CD8-positive, alpha-beta T cell (primary cell): ENCODE measurements at regions of chr1 and their contacts with region 1.

Region 1: DNA sequence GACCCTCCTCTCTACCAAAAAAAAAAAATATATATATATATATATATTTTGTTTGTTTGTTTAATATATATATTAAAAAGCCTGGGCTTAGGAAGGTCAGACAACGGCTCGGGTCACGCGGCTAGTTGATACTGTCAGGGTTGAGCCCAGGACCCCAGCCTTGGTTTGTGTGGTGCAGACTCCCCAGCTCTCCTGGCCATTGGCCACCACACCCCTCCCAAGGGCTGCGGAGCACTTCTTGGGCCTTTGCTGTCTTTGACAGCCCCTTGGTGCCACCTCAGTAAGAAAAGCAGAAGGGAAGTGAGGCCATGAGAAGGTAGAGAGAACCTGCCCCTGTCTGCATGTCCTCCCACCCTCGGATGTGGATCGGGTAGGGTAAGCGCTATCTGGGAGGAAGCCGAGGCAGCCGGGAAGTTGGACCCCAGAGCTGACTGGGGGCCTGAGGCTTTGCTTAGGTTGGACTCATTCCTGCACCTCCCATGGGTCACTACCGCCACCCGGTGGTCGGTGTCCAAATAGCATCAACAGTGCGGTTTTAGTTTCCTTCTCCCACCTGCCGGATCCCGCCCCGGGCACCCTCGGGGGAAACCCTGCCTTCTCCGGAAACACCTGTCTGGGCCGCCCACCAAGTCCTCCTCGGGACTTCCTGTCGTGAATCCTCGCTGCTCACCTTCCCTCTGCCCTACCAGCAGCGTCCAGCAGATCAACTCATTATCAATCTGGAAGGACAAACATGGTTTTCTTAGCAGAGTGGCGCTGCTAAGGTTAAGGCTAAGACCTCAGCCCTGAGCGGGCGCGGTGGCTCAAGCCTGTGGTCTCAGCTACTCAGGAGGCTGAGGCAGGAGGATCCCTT is 29.8 kb upstream of the GNPAT start:
- DNase-seq: peak; percentile 76 to 96 (median 90)
- ATAC-seq: peak; percentile 96
- H3K4me3 ChIP-seq: peak overlapping the region; percentile 42 to 52
- H3K4me3 Mint-ChIP-seq: peak overlapping the region; percentile 83
- H3K27ac ChIP-seq: no peak overlapping the region
- H3K27ac Mint-ChIP-seq: peak overlapping the region; percentile 73
- H3K4me1 ChIP-seq: peaks cover 19% of the 10 kb centered on the region
- H3K4me1 Mint-ChIP-seq: peaks cover 28% of the 10 kb centered on the region
- H3K27me3 ChIP-seq: no peaks in the 10 kb centered on the region
- H3K27me3 Mint-ChIP-seq: no peaks in the 10 kb centered on the region
- CTCF ChIP-seq: peak; percentile 93

Region 2: GRCh38 chr1:230642263-230642959 is 568.8 kb before region 1 on chr1 and contains the start of gene COG2:
- CTCF ChIA-PET with region 1: interaction called, 3 read pairs
- POLR2A ChIA-PET with region 1: no interaction called
- intact Hi-C with region 1: loop called (anchors 1 kb)
- DNase-seq: peak; percentile 92 to 99 (median 96)
- ATAC-seq: peak; percentile 96
- H3K4me3 ChIP-seq: peak within 1 kb of the TSS; percentile 72 to 92
- H3K4me3 Mint-ChIP-seq: peak within 1 kb of the TSS; percentile 99
- H3K27ac ChIP-seq: peak within 1 kb of the TSS; percentile 73 to 82
- H3K27ac Mint-ChIP-seq: peak within 1 kb of the TSS; percentile 96
- H3K4me1 ChIP-seq: peaks cover 36% of the 10 kb centered on the region
- H3K4me1 Mint-ChIP-seq: peaks cover 54% of the 10 kb centered on the region
- H3K27me3 ChIP-seq: peaks cover 0 to 2% of the 10 kb centered on the region in 2 experiments
- H3K27me3 Mint-ChIP-seq: peaks cover 13% of the 10 kb centered on the region
- CTCF ChIP-seq: peak; percentile 100
- total RNA-seq, gene COG2: 20.1 to 25.7 TPM

Region 3: GRCh38 chr1:230867903-230868735 is 343.1 kb before region 1 on chr1 and contains the start of gene C1orf198:
- CTCF ChIA-PET with region 1: no interaction called
- POLR2A ChIA-PET with region 1: no interaction called
- intact Hi-C with region 1: loop called in 1 of 2 experiments (anchors 2 kb)
- DNase-seq: peak; percentile 53 to 88 (median 72)
- ATAC-seq: peak; percentile 93
- H3K4me3 ChIP-seq: peak within 1 kb of the TSS; percentile 65 to 79
- H3K4me3 Mint-ChIP-seq: peak within 1 kb of the TSS; percentile 89
- H3K27ac ChIP-seq: peak within 1 kb of the TSS in 1 of 2 experiments; percentile 57
- H3K27ac Mint-ChIP-seq: peak within 1 kb of the TSS; percentile 49
- H3K4me1 ChIP-seq: peaks cover 14% of the 10 kb centered on the region
- H3K4me1 Mint-ChIP-seq: peaks cover 21% of the 10 kb centered on the region
- H3K27me3 ChIP-seq: no peaks in the 10 kb centered on the region
- H3K27me3 Mint-ChIP-seq: peaks cover 18% of the 10 kb centered on the region
- CTCF ChIP-seq: no peak
- total RNA-seq, gene C1orf198: 3.2 to 3.8 TPM

Region 4: DNA sequence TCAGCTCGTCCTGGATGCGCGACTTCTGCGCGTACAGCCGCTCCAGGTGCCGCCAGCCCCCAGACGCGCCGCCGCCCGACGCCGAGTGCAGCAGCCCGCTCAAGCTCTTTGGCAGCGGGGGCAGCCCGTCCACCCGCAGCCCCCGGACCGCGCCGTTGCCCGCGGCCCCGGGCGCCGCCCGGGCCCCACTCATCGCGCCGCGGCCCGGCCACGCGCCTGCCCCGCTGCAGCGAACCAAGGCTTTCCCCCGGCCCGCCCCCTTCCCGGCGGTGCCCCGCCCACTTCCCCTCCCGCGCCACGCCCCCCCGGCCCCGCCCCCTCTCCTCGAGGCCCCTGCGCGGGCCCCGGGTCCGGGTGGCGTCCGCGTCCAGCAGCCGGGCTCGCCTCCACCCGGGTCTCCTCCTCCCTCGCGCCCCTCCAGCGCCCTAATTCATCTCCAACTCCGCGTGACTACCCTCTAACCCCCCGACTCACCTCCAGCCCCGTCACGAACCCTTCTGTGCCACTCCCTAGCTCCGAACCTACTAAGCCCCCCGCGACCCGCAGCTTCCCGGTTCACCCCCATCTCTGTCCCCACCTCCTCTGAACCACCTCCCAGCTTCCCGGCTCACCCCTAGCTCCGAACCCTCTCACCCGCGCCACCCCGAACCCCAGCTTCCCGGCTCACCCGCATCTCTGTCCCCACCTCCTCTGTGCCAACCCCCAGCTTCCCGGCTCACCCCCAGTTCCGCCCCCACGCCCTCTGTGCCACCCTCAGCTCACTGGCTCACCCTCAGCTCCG is 171.0 kb before region 1 on chr1 and contains the start of gene FAM89A:
- CTCF ChIA-PET with region 1: no interaction called
- POLR2A ChIA-PET with region 1: no interaction called
- intact Hi-C with region 1: loop called (anchors 1 to 2 kb)
- DNase-seq: peak; percentile 44 to 86 (median 71)
- ATAC-seq: peak; percentile 72
- H3K4me3 ChIP-seq: peak within 1 kb of the TSS; percentile 81 to 83
- H3K4me3 Mint-ChIP-seq: peak within 1 kb of the TSS; percentile 83
- H3K27ac ChIP-seq: no peak within 1 kb of the TSS
- H3K27ac Mint-ChIP-seq: peak within 1 kb of the TSS; percentile 27
- H3K4me1 ChIP-seq: peaks cover 22% of the 10 kb centered on the region
- H3K4me1 Mint-ChIP-seq: peaks cover 33% of the 10 kb centered on the region
- H3K27me3 ChIP-seq: no peaks in the 10 kb centered on the region
- H3K27me3 Mint-ChIP-seq: no peaks in the 10 kb centered on the region
- CTCF ChIP-seq: no peak
- total RNA-seq, gene FAM89A: 1.4 to 2.1 TPM

Region 5: GRCh38 chr1:231196728-231197127 is 14.5 kb before region 1 on chr1:
- CTCF ChIA-PET with region 1: interaction called, 13 read pairs
- POLR2A ChIA-PET with region 1: no interaction called
- intact Hi-C with region 1: no loop called
- DNase-seq: no peak
- ATAC-seq: no peak
- H3K4me3 ChIP-seq: no peak overlapping the region
- H3K4me3 Mint-ChIP-seq: no peak overlapping the region
- H3K27ac ChIP-seq: no peak overlapping the region
- H3K27ac Mint-ChIP-seq: no peak overlapping the region
- H3K4me1 ChIP-seq: no peaks in the 10 kb centered on the region
- H3K4me1 Mint-ChIP-seq: peaks cover 4% of the 10 kb centered on the region
- H3K27me3 ChIP-seq: peaks cover 0 to 3% of the 10 kb centered on the region in 2 experiments
- H3K27me3 Mint-ChIP-seq: peaks cover 7% of the 10 kb centered on the region
- CTCF ChIP-seq: no peak